AG04449 (cell line): ENCODE measurements at regions of chr10 and their contacts with region 1.

Region 1: GRCh38 chr10:91632671-91633550 is at the start of gene PPP1R3C:
- DNase-seq: peak; percentile 80
- H3K4me3 ChIP-seq: peak within 1 kb of the TSS; percentile 79
- CTCF ChIP-seq: peak; percentile 68

Region 2: GRCh38 chr10:91103384-91104192 is 529.3 kb before region 1 on chr10:
- CTCF ChIA-PET with region 1: no interaction called
- POLR2A ChIA-PET with region 1: no interaction called
- DNase-seq: no peak
- H3K4me3 ChIP-seq: no peak overlapping the region
- CTCF ChIP-seq: no peak

Region 3: DNA sequence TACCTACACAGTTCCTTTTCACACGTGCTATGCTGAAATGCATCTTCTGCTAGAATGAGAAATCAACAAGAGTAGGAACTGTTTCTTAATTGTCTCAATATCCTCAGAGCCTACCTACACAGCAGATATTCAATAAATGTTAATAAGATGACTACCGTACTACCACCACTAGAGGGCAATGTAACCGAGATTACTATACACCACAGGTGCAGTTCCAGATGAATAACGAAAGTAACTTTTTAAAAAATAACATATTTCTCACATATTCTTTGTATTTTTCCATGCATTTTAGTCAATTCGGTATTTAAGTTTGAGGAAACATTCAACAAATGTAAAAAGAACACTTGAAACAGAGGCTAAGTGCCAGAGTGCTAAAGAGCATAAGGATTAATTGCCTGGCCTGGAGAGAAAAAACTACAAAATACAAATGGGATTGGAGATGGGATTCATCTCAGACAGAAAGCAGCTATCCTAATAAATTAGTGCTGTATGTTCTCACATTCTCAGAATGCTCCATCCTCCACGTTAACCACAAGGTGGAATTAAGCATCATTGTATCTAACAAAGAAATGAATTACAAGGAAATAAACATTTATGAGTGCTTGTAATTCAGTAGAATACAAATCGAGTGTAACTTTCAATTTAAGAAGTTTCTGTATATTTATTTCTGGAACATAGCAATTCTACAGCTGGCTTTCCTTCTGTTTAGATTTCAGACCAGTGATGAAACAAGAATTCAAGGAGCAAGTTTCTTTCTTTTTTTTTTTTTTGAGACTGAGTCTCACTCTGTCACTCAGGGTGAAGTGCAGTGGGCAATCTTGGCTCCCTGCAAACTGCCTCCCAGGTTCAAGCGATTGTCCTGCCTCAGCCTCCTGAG is 243.0 kb before region 1 on chr10:
- CTCF ChIA-PET with region 1: interaction called, 19 read pairs
- POLR2A ChIA-PET with region 1: no interaction called
- DNase-seq: no peak
- H3K4me3 ChIP-seq: no peak overlapping the region
- CTCF ChIP-seq: peak; percentile 30

Region 4: DNA sequence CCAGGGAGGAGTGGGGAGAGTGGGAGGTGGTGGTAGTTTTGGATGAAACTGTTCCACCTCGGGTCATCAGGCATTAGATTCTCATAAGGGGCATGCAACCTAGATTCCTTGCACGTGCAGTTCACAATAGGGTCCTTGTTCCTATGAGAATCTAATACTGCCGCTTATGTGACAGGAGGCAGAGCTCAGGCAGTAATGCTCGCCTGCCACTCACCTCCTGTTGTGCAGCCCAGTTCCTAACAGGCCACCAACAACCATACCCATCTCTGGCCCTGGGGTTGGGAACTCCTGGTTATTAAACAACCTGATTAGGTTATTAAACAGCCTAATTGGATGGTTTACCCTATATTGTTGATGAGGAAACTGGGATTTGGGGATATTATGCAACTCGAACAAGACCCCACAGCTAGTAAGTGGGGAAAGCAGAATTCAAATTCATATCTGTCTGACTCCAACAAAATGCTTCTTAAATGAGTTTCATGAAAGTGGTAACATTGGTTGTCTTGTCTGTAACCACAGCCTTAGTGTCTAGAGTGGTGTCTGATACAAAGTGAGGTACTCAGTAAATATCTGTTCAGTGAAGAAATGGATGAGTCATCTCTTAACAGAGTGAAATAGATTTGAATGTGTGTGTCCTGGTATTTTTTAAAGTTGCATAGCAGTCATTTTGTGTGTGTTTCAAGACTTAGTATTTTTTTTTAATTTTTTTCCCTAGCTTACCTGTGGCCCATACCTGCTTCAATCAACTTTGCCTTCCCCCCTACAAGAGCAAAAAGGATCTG is 121.2 kb before region 1 on chr10:
- CTCF ChIA-PET with region 1: interaction called, 43 read pairs
- POLR2A ChIA-PET with region 1: interaction called, 17 read pairs
- DNase-seq: peak; percentile 75
- H3K4me3 ChIP-seq: no peak overlapping the region
- CTCF ChIP-seq: no peak

Region 5: DNA sequence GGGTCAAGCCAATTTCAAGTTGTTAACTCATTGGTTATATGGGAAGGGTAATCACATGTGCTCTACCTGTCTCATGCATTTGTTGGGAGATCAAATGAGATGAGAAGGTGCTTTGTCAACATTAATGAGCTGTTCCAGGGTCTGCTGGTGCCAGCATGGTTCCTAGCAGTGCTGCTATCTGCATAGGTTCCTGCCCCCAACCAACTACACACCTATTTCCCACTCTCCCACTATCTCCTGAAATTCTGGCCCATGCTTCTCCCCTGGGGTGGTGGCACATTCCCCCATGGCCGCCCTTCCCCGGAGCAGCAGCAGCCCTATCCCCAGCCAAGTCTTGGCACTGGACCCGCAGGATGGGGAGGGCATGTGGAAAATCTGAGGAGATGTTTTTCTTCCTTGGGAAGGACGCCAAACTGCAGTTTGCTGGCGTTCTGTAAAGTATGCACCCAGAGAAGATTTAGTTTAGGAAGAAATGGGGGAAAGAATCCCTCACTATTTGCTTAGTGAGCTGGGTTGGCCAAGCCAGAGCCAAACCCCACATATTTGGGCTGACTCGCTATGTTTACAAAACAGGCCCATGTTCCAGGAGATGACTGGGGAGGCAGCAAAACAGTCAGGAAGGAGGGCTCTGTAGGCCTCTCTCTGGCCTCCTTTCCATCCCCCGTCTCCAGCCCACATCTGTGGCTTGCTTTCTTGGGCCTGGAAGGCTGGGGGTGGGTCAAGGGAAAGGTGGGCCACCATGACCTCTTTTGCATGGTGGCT is 42.6 kb before region 1 on chr10:
- CTCF ChIA-PET with region 1: interaction called, 6 read pairs
- POLR2A ChIA-PET with region 1: interaction called, 13 read pairs
- DNase-seq: no peak
- H3K4me3 ChIP-seq: 0 out of 2 replicates have a peak overlapping the region, but pooled peaks have one; percentile 9
- CTCF ChIP-seq: no peak

Region 6: GRCh38 chr10:91621483-91622113 is 11.3 kb before region 1 on chr10:
- CTCF ChIA-PET with region 1: interaction called, 22 read pairs
- POLR2A ChIA-PET with region 1: interaction called, 23 read pairs
- DNase-seq: no peak
- H3K4me3 ChIP-seq: no peak overlapping the region
- CTCF ChIP-seq: no peak

Region 7: DNA sequence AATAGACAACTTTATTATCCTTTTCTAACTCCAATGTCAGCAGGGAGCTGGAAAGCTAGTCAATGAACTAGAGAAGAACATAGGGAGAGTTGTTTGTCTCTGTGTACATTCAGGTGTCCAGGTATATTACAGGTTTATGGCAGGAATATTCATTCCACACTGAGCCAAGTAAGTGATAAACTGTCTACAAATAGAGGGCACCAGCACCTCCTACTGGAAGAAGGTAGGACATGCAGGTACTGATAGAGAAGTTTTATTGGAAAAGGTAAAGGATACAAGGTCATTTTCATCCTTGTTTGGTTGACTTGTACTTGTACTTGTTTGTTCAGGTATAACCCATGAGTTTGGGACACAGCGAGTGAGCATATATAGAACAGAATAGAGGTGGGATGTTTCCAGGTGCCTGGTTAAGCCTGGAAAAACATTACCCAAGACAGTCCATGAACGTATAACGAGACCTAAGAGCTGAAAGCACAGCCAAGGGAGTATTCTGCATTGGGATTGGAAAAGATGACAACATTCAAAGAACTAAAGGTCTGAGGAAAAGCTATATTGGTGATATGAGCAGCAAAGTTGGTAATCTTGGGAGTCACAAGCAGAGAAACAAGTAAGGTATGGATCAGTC is 61.4 kb after region 1 on chr10:
- CTCF ChIA-PET with region 1: interaction called, 102 read pairs
- POLR2A ChIA-PET with region 1: interaction called, 5 read pairs
- DNase-seq: no peak
- H3K4me3 ChIP-seq: no peak overlapping the region
- CTCF ChIP-seq: peak; percentile 72

Region 8: DNA sequence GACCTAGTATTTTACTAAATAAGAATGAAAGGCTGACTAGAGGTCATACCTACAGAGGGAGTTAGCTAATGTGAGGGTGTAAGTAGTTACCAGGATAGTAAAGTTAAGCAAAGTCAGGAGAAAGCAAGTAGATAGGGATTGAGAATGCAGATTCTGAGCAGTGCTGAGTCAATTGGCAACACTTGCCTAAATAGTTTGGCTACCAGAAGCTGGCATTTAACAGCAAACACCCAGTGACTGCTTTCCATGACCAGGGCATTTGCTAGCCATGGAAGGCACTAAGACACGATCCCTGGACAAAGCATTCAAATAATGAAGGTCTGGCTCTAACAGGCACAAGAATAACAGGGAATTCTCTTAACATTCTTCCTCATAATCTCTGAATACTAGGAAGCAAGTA is 191.2 kb after region 1 on chr10:
- CTCF ChIA-PET with region 1: no interaction called
- POLR2A ChIA-PET with region 1: no interaction called
- DNase-seq: no peak
- H3K4me3 ChIP-seq: no peak overlapping the region
- CTCF ChIP-seq: no peak

Region 9: GRCh38 chr10:91880312-91880711 is 247.4 kb after region 1 on chr10:
- CTCF ChIA-PET with region 1: no interaction called
- POLR2A ChIA-PET with region 1: no interaction called
- DNase-seq: no peak
- H3K4me3 ChIP-seq: no peak overlapping the region
- CTCF ChIP-seq: no peak